Heart right ventricle (tissue), 16 donors: ENCODE measurements at regions of chr14 and their contacts with region 1.

Region 1: GRCh38 chr14:27281474-27281873 is 683.6 kb upstream of the NOVA1 start:
- DNase-seq: no peak
- ATAC-seq: no peak
- H3K4me3 ChIP-seq: no peak overlapping the region
- H3K27ac ChIP-seq: no peak overlapping the region
- H3K4me1 ChIP-seq: no peaks in the 10 kb centered on the region
- H3K27me3 ChIP-seq: no peaks in the 10 kb centered on the region
- CTCF ChIP-seq: no peak

Region 2: DNA sequence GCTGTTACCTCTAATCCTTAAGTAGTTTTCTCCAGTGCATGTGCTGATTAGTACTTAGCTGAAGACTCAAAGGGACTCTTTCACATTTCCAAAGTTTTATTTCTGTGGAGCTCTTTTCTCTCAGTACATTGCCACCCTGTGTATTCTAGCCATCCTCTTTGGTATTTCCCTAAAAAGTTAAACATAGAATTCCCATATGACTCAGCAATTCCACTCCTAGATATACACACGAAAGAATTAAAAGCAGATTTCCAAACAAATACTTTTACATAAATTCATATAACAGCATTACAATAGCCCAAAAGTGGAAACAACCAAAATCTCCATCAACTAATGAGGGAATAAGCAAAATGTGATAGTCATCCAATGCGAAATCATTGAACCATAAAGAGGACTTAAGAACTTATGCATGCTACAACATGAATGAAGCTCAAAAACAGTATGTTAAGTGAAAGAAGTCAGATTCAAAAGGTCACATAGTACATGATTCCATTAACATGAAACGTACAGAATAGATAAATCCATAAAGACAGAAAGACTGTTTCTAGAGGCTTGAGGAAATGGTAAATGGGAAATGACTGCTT is 674.7 kb before region 1 on chr14:
- intact Hi-C with region 1: no loop called
- DNase-seq: no peak
- ATAC-seq: no peak
- H3K4me3 ChIP-seq: no peak overlapping the region
- H3K27ac ChIP-seq: no peak overlapping the region
- H3K4me1 ChIP-seq: no peaks in the 10 kb centered on the region
- H3K27me3 ChIP-seq: no peaks in the 10 kb centered on the region
- CTCF ChIP-seq: no peak

Region 3: DNA sequence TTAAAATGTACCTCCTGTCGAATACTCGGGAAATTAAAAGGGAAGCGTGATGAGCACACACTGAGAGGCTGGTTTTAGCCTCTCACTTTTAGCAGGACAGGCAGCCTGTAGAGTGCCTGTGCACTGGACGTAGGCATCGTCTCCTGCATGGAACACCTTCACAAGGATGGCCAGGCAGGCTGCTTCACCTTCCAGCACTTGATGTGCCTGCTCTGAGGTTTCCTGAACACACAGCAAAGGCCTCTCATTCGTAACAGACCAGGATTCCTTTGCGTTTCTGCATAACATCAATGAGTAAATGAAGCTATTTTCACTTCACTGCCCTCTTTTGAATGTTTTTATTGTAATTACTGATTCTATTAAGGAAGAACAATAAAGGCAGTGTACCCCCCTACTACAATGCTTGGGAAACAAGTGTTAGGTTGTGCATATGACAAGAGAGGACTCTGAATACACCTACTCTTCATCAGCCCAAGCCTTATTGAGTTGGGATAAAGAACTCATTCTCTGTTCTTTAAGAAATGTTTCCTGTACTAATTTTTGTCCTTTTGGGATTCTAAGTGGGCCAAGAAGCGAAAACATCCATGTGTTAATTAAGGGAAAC is 407.5 kb after region 1 on chr14:
- intact Hi-C with region 1: loop called in 1 of 10 experiments (anchors 5 kb)
- DNase-seq: no peak
- ATAC-seq: no peak
- H3K4me3 ChIP-seq: no peak overlapping the region
- H3K27ac ChIP-seq: no peak overlapping the region
- H3K4me1 ChIP-seq: no peaks in the 10 kb centered on the region
- H3K27me3 ChIP-seq: no peaks in the 10 kb centered on the region
- CTCF ChIP-seq: no peak